ENCODE measurements at regions of chr6 and their contacts with region 1.

Region 1: DNA sequence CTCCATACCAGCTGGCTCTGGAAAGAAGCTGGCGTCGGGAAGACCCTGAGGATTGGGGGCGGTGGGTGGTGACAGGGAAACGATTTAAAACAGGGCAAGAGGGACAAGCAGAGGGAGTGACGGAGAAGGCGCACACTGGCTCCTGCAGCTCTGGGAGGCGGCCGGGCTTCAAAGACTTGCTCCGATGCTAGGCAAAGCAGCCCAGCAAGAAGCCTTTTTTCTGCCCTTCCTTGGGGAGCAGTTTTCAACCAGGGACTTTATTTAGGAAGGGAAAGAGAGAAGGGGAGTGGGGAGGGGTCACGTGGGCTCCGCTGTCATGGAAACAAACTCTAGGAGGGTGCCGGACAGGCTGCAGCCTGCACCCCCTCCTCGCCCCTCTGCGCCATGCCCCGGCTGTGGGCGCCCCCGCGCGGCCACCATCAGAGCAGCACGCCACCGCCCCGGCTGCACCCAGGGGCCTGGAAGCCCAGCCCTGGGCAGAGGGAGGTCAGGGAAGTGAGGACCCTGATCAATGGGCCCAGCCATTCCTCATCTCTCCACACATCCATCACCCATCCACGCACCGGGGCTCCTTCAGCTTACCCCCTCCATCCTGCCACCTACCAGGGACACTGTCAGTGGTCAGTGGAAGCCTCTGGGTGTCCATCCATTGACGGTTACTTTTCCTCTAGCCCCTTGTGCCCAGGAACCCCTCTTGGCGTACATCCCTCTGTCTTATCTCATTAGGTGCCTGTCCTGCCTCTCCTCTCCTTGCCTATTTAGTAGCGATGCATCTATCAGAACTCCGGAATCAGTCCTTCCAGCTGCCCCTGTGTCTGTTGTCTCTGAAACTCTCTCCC is 66.6 kb upstream of the CCDC167 start:
- DNase-seq: peak; percentile 68
- H3K4me3 Mint-ChIP-seq: peak overlapping the region; percentile 24
- H3K27ac Mint-ChIP-seq: no peak overlapping the region
- H3K4me1 Mint-ChIP-seq: no peaks in the 10 kb centered on the region
- H3K27me3 Mint-ChIP-seq: peaks cover 21% of the 10 kb centered on the region

Region 2: GRCh38 chr6:37324131-37325033 is 241.9 kb before region 1 on chr6:
- intact Hi-C with region 1: loop called (anchors 1 kb)
- DNase-seq: no peak
- H3K4me3 Mint-ChIP-seq: no peak overlapping the region
- H3K27ac Mint-ChIP-seq: peak overlapping the region; percentile 64
- H3K4me1 Mint-ChIP-seq: peaks cover 19% of the 10 kb centered on the region
- H3K27me3 Mint-ChIP-seq: no peaks in the 10 kb centered on the region

Region 3: DNA sequence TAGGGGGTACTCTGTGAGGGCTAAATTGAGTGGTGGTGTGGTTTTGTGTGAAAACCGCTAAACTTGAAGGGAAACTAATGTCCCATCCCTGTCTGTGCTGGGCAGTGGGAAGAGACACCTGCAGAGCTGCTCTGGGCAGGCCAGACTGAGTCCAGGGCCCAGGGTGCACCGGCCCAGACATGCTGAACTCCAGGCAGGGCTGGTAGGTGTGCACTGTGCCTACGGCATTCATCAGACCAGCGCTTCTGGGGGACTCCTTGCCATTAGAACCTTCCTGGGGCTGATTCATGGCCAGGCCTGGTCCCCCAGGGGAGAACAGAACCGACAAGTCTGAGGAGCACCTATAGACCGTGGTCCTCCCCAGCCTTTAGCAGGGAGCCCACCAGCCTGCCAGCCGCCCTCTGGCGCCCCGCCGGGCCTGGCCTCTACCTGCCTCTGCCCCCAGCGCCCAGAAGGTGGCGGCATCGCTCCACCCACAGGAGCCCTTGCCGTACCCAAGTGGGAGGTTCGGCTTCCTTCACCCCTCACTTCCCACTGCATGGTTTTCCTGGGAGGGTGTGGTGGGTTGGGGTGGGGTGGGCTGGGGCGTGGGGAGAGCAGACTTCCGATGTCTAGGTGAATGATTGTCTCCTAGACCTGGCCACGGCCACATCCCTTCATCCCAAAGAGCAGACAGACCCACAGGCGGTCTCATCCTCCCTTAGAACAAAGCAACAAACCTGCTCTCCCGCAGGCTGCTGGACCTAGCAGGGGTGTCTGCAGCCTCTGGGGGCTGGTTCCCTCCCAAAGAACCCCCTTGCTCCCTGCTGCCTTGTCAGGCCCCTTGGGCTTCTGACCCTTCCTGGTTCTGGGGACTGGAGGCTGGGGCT is 82.2 kb before region 1 on chr6:
- intact Hi-C with region 1: loop called (anchors 1 kb)
- DNase-seq: peak; percentile 53
- H3K4me3 Mint-ChIP-seq: no peak overlapping the region
- H3K27ac Mint-ChIP-seq: no peak overlapping the region
- H3K4me1 Mint-ChIP-seq: peaks cover 15% of the 10 kb centered on the region
- H3K27me3 Mint-ChIP-seq: no peaks in the 10 kb centered on the region

Region 4: DNA sequence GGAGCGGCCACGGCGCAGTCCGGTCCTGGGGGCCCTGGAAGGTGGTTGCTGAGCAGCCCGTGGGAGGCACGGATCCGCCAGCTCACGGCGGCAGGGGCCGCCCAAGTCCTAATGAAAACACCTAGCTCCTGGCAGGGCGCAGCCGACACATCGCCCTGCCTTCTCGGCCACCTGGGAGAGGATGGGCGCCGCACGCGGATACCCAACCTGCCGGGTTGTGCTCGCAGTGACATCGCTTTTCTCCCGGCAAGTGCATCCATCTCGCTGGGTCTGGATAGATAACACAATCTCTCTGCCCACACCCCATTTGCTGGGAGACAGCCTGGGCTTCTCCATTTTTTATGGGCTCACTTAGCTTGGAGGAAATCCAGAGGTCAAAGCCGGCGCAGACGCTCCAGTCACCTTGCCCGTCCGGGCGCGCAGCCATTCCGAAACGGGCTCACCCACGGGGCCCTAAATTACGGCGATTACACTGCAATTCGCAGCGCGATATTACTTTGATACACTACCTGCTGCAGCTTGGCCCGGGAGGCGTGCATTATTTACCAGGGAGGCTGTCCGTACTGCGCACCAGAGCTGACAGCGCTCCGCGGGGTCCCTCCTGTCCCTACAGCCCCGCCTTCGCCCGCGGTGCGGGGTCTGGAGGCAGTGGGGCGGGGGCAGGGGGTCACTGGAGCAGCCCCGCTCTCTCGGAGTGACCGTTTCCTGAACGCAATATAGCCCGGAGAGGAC is 30.4 kb before region 1 on chr6:
- intact Hi-C with region 1: loop called (anchors 2 kb)
- DNase-seq: no peak
- H3K4me3 Mint-ChIP-seq: peak overlapping the region; percentile 5
- H3K27ac Mint-ChIP-seq: no peak overlapping the region
- H3K4me1 Mint-ChIP-seq: no peaks in the 10 kb centered on the region
- H3K27me3 Mint-ChIP-seq: peaks cover 57% of the 10 kb centered on the region

Region 5: DNA sequence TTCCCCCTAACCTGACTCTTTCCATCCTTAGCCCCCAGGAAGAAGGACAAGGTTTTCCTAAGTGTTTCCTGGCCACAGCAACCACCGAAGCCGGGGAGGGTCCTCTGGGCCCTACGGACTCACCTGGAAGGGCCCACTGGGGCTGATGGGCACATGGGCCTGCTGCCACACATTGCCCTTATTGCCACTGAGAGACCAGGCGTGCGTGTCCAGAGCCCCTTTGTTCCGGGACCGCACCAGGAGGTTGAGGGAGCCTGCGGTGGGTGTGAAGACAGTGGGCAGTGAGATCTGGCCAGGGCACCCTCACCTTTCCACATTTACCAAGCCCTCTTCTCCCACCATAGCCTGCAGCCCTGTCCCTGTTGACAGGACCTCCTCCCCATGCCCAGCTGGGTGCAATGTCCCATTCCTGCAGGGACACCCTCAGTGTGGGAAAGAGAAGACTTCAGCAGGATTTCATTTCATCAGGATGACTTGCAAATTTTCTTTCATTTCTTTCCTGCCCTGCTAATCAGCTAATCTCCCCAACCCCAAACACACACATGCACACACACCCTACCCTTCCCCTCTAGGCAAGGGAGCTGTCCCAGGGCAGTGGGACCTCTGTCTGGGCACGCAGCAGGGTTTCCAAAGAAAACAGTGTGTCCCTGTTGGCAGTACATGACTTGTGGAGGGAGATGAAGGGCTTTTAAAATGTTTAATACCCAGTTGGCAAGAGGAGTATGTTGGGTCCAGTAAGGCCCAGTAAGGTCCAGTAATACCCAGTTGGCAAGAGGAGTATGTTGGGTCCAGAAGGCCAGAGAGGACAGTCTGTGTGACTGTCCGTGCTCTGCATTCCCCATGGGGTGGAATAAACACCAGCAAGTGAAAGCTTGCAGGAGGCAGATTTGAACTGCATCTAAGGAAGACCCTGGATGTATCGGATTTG is 72.3 kb after region 1 on chr6:
- intact Hi-C with region 1: no loop called
- DNase-seq: no peak
- H3K4me3 Mint-ChIP-seq: no peak overlapping the region
- H3K27ac Mint-ChIP-seq: no peak overlapping the region
- H3K4me1 Mint-ChIP-seq: peaks cover 17% of the 10 kb centered on the region
- H3K27me3 Mint-ChIP-seq: peaks cover 5% of the 10 kb centered on the region

Region 6: GRCh38 chr6:37691904-37692806 is 125.8 kb after region 1 on chr6:
- intact Hi-C with region 1: loop called (anchors 1 kb)
- DNase-seq: peak; percentile 65
- H3K4me3 Mint-ChIP-seq: no peak overlapping the region
- H3K27ac Mint-ChIP-seq: no peak overlapping the region
- H3K4me1 Mint-ChIP-seq: peaks cover 18% of the 10 kb centered on the region
- H3K27me3 Mint-ChIP-seq: peaks cover 28% of the 10 kb centered on the region

Region 7: GRCh38 chr6:37822851-37823682 is 256.7 kb after region 1 on chr6:
- intact Hi-C with region 1: no loop called
- DNase-seq: no peak
- H3K4me3 Mint-ChIP-seq: no peak overlapping the region
- H3K27ac Mint-ChIP-seq: no peak overlapping the region
- H3K4me1 Mint-ChIP-seq: peaks cover 78% of the 10 kb centered on the region
- H3K27me3 Mint-ChIP-seq: no peaks in the 10 kb centered on the region

Measured in activated T-helper 1 cell treated with anti-CD3 and anti-CD28 coated beads, Interleukin-12 subunit alpha, Interleukin-12 subunit beta, Interleukin-2, Interleukin-4 antibody, amounts not matched to agents 30 ng/mL and 10 ng/mL and 1 ng/mL, durations not matched to agents 14 hours and 24 hours and 36 hours (primary cell).